Activated naive CD8-positive, alpha-beta T cell treated with anti-CD3 and anti-CD28 coated beads, Interleukin-2, amount 10 ng/mL, durations not matched to agents 7 days and 5 days (primary cell): ENCODE measurements at regions of chr9 and their contacts with region 1.

Region 1: GRCh38 chr9:35071814-35072460 is 488 bp downstream of the VCP start:
- DNase-seq: peak; percentile 83
- ATAC-seq: peak; percentile 64
- H3K4me3 Mint-ChIP-seq: peak overlapping the region; percentile 93
- H3K27ac Mint-ChIP-seq: peak overlapping the region; percentile 93
- H3K4me1 Mint-ChIP-seq: peaks cover 38% of the 10 kb centered on the region
- H3K27me3 Mint-ChIP-seq: no peaks in the 10 kb centered on the region

Region 2: GRCh38 chr9:35096035-35096849 is 24.3 kb after region 1 on chr9 and contains the start of gene PIGO:
- POLR2A ChIA-PET with region 1: interaction called, 64 read pairs
- DNase-seq: peak; percentile 92
- ATAC-seq: peak; percentile 92
- H3K4me3 Mint-ChIP-seq: peak within 1 kb of the TSS; percentile 86
- H3K27ac Mint-ChIP-seq: peak within 1 kb of the TSS; percentile 88
- H3K4me1 Mint-ChIP-seq: peaks cover 29% of the 10 kb centered on the region
- H3K27me3 Mint-ChIP-seq: no peaks in the 10 kb centered on the region
- total RNA-seq, gene PIGO: 30.8 to 31.4 TPM

Region 3: DNA sequence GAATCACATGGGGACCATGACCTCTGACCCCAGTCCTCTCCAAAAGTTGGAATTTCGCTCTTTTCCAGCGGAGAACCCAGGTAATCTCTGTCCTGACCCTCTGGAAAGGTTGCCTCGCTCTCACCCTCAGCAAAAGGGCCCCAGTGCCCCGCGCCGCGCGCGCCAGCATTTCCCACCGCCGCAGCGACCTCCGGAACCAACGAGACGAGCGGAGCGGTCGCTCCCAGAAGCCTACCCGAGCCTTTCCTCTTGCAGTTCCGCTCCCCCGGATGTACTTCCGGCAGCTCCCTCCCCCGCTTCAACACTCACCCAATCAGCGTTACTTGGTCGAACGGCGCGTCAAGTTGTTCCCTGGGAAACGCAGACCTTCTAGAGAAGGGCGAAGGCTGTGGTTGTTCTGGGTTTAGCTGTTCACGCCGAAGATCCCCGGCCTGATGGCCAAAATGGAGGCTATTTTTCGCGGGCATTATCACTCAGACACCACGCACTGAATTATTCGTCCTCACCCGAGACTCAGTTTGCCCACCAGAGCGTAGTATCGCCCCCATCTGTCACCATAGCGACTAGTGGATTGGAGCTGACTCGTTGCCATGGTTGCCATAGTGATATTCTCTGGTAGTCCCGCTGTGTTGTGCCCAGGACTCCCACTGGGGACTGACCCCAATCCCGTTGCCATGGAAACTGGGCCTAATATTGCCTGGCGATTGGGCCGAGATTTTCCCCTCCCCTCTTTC is 31.2 kb after region 1 on chr9 and contains the start of gene STOML2:
- POLR2A ChIA-PET with region 1: interaction called, 64 read pairs
- DNase-seq: peak; percentile 85
- ATAC-seq: peak; percentile 96
- H3K4me3 Mint-ChIP-seq: peak within 1 kb of the TSS; percentile 81
- H3K27ac Mint-ChIP-seq: peak within 1 kb of the TSS; percentile 95
- H3K4me1 Mint-ChIP-seq: peaks cover 31% of the 10 kb centered on the region
- H3K27me3 Mint-ChIP-seq: no peaks in the 10 kb centered on the region
- total RNA-seq, gene STOML2: 90.3 to 91.9 TPM

Region 4: GRCh38 chr9:35116898-35117551 is 45.1 kb after region 1 on chr9:
- POLR2A ChIA-PET with region 1: interaction called, 31 read pairs
- DNase-seq: peak; percentile 73
- ATAC-seq: peak; percentile 46
- H3K4me3 Mint-ChIP-seq: peak overlapping the region; percentile 100
- H3K27ac Mint-ChIP-seq: peak overlapping the region; percentile 98
- H3K4me1 Mint-ChIP-seq: peaks cover 33% of the 10 kb centered on the region
- H3K27me3 Mint-ChIP-seq: peaks cover 5% of the 10 kb centered on the region